CD8-positive, alpha-beta T cell (primary cell): ENCODE measurements at regions of chr3 and their contacts with region 1.

Region 1: GRCh38 chr3:179071550-179072397 is at the start of gene ZMAT3:
- DNase-seq: peak; percentile 65 to 92 (median 85)
- ATAC-seq: peak; percentile 81
- H3K4me3 ChIP-seq: peak within 1 kb of the TSS; percentile 76 to 88
- H3K4me3 Mint-ChIP-seq: peak within 1 kb of the TSS; percentile 98
- H3K27ac ChIP-seq: peak within 1 kb of the TSS; percentile 80 to 83
- H3K27ac Mint-ChIP-seq: peak within 1 kb of the TSS; percentile 93
- H3K4me1 ChIP-seq: peaks cover 17% of the 10 kb centered on the region
- H3K4me1 Mint-ChIP-seq: peaks cover 61% of the 10 kb centered on the region
- H3K27me3 ChIP-seq: no peaks in the 10 kb centered on the region
- H3K27me3 Mint-ChIP-seq: no peaks in the 10 kb centered on the region
- CTCF ChIP-seq: no peak
- total RNA-seq, gene ZMAT3: 8.7 to 9.4 TPM

Region 2: DNA sequence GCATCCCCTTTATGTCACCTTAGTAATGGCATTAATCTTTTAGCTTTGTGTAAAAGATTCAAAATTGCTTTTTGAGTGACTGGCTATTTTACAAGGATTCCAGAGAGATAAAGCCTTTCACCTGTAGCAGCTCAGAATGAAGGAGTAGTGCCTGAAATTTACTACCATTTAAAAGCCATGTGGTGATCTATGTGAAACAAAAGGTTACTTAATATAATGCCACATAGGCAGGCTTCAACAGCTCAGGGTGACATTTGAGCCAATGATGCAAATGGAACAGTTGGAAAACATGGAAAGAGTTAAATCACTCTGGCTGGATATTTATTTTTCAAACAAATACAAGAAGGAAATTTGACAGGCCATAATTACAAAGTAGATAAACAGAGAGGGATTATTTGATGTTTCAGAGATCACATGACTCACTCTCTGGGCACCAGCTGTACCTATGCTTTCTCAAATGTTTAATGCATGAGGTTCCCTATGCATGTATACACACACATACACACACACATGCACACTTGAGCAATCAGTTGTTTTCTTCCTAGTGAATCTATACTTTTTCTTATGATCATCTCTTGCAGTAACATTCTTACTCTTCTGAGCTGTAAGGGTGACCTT is 171.6 kb before region 1 on chr3:
- CTCF ChIA-PET with region 1: no interaction called
- POLR2A ChIA-PET with region 1: no interaction called
- intact Hi-C with region 1: no loop called
- DNase-seq: no peak
- ATAC-seq: no peak
- H3K4me3 ChIP-seq: no peak overlapping the region
- H3K4me3 Mint-ChIP-seq: no peak overlapping the region
- H3K27ac ChIP-seq: no peak overlapping the region
- H3K27ac Mint-ChIP-seq: no peak overlapping the region
- H3K4me1 ChIP-seq: no peaks in the 10 kb centered on the region
- H3K4me1 Mint-ChIP-seq: no peaks in the 10 kb centered on the region
- H3K27me3 ChIP-seq: peaks cover 0 to 3% of the 10 kb centered on the region in 2 experiments
- H3K27me3 Mint-ChIP-seq: no peaks in the 10 kb centered on the region
- CTCF ChIP-seq: no peak

Region 3: GRCh38 chr3:179037351-179037750 is 34.4 kb before region 1 on chr3:
- CTCF ChIA-PET with region 1: interaction called, 3 read pairs
- POLR2A ChIA-PET with region 1: no interaction called
- intact Hi-C with region 1: loop called in 1 of 2 experiments (anchors 1 kb)
- DNase-seq: peak in 8 of 9 experiments; percentile 18 to 66 (median 45)
- ATAC-seq: peak; percentile 87
- H3K4me3 ChIP-seq: peak overlapping the region in 1 of 2 experiments; percentile 1
- H3K4me3 Mint-ChIP-seq: peak overlapping the region; percentile 54
- H3K27ac ChIP-seq: peak overlapping the region in 1 of 2 experiments; percentile 21
- H3K27ac Mint-ChIP-seq: no peak overlapping the region
- H3K4me1 ChIP-seq: peaks cover 17% of the 10 kb centered on the region
- H3K4me1 Mint-ChIP-seq: peaks cover 14% of the 10 kb centered on the region
- H3K27me3 ChIP-seq: no peaks in the 10 kb centered on the region
- H3K27me3 Mint-ChIP-seq: no peaks in the 10 kb centered on the region
- CTCF ChIP-seq: no peak

Region 4: GRCh38 chr3:179108086-179108485 is 36.3 kb after region 1 on chr3:
- CTCF ChIA-PET with region 1: interaction called, 6 read pairs
- POLR2A ChIA-PET with region 1: interaction called, 4 read pairs
- intact Hi-C with region 1: loop called in 1 of 2 experiments (anchors 5 kb)
- DNase-seq: no peak
- ATAC-seq: no peak
- H3K4me3 ChIP-seq: no peak overlapping the region
- H3K4me3 Mint-ChIP-seq: no peak overlapping the region
- H3K27ac ChIP-seq: no peak overlapping the region
- H3K27ac Mint-ChIP-seq: no peak overlapping the region
- H3K4me1 ChIP-seq: no peaks in the 10 kb centered on the region
- H3K4me1 Mint-ChIP-seq: peaks cover 1% of the 10 kb centered on the region
- H3K27me3 ChIP-seq: no peaks in the 10 kb centered on the region
- H3K27me3 Mint-ChIP-seq: peaks cover 4% of the 10 kb centered on the region
- CTCF ChIP-seq: no peak

Region 5: DNA sequence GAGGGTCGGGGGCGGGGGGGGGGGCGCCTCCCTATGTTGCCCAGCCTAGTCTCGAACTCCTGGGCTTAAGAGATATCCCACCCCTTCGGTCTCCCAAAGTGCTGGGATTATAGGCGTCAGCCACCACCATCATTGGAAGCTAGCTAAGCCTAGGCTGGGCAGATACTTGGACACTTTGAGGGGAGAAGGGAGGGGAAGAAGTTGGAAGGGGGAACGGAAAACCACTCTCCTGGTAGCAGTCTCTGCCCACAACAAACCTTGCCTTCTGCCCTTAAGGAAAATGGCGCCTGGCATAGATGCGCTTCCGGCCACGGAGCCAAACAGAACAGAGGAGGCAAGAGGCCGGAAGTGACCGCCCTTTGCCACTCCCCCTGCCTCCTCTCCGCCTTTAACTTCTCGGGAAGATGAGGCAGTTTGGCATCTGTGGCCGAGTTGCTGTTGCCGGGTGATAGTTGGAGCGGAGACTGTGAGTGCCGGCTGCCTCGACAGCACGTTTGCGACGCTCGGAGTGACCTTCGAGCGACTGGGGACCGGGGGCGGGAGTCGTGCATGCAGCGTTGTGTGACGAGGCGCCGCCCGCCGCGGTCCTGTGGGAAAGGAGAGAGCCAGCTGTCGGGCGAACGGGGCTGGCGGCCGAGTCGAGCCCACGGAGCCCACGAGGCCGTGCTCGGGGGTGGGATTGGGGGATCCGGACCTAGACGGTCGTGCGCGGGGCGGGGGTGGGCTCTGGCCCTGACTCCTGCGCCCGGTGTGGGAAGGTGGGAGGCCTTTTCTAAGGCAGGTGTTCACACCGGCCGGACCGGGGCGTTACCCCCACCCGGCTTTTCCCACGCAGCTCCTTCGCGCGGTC is 275.8 kb after region 1 on chr3 and contains the start of gene MFN1:
- CTCF ChIA-PET with region 1: interaction called, 4 read pairs
- POLR2A ChIA-PET with region 1: interaction called, 4 read pairs
- intact Hi-C with region 1: loop called in 1 of 2 experiments (anchors 1 kb)
- DNase-seq: peak; percentile 72 to 95 (median 88)
- ATAC-seq: peak; percentile 97
- H3K4me3 ChIP-seq: peak within 1 kb of the TSS; percentile 89 to 94
- H3K4me3 Mint-ChIP-seq: peak within 1 kb of the TSS; percentile 100
- H3K27ac ChIP-seq: peak within 1 kb of the TSS; percentile 68 to 77
- H3K27ac Mint-ChIP-seq: peak within 1 kb of the TSS; percentile 99
- H3K4me1 ChIP-seq: peaks cover 6% of the 10 kb centered on the region
- H3K4me1 Mint-ChIP-seq: peaks cover 35% of the 10 kb centered on the region
- H3K27me3 ChIP-seq: no peaks in the 10 kb centered on the region
- H3K27me3 Mint-ChIP-seq: no peaks in the 10 kb centered on the region
- CTCF ChIP-seq: no peak
- total RNA-seq, gene MFN1: 21.9 to 26.7 TPM